ENCODE measurements at regions of chr18 and their contacts with region 1.

Region 1: DNA sequence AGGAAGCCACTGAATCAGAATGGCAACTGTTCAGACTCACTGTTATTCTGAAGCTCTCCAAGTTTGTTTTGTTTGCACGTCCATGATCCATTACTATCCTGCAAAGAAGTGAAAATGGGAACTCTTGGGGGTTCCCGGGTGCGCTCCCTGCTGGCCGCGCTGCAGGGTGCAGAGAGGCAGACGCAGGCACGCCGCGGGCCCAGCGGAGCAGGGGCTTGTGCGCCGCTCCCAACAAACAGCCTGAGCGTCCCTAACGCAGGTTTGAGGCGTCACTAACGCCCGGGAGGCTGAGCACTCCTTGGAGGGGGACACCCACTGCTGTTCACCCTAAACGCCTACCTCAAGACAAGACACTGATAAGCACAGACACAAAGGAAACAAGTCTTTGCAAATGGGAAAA is 14.3 kb upstream of the PIEZO2 start:
- DNase-seq: peak; percentile 40
- H3K4me3 ChIP-seq: no peak overlapping the region
- H3K27ac ChIP-seq: no peak overlapping the region
- H3K4me1 ChIP-seq: no peaks in the 10 kb centered on the region
- H3K27me3 ChIP-seq: peaks cover 8% of the 10 kb centered on the region
- CTCF ChIP-seq: peak; percentile 63

Region 2: DNA sequence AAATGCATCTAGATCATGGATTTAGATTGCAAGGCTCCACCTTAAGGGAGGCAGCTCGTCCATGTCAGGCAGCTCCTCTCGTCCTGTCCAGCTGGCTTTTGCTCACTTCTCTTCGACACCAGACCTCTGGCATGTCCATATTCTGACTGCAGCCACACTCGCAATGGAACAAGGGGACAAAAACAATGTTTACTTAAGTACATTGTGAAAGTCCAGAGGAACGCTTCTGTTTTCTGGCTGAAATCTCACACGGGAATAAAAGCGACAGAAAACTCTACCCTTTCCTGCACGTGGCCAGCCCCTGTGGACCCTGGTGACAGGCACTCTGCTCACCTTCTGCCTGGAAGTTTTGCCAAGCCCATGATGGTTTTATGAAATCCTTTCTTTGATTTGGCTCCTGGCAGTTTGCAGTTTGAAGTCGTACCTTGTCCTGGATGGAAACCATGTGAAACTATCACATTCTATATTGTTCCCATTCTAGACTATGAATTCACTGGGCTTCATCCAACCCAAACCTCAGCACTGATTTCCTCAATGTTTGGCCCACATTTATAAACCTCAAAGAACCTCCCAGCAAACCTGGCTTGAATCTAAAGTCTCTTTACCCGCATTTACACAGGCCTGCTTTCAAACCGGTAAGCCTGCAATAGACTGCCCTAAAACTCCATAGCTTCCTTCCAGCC is 120.0 kb after region 1 on chr18:
- CTCF ChIA-PET with region 1: no interaction called
- POLR2A ChIA-PET with region 1: no interaction called
- intact Hi-C with region 1: no loop called
- DNase-seq: no peak
- H3K4me3 ChIP-seq: no peak overlapping the region
- H3K27ac ChIP-seq: no peak overlapping the region
- H3K4me1 ChIP-seq: no peaks in the 10 kb centered on the region
- H3K27me3 ChIP-seq: peaks cover 4% of the 10 kb centered on the region
- CTCF ChIP-seq: no peak

Region 3: GRCh38 chr18:11310476-11311086 is 146.9 kb after region 1 on chr18:
- CTCF ChIA-PET with region 1: no interaction called
- POLR2A ChIA-PET with region 1: no interaction called
- intact Hi-C with region 1: loop called (anchors 10 kb)
- DNase-seq: peak; percentile 48
- H3K4me3 ChIP-seq: no peak overlapping the region
- H3K27ac ChIP-seq: no peak overlapping the region
- H3K4me1 ChIP-seq: no peaks in the 10 kb centered on the region
- H3K27me3 ChIP-seq: peaks cover 25% of the 10 kb centered on the region
- CTCF ChIP-seq: peak; percentile 72

Measured in A673 (cell line).